Right cardiac atrium (tissue), 5 donors: ENCODE measurements at regions of chr3 and their contacts with region 1.

Region 1: DNA sequence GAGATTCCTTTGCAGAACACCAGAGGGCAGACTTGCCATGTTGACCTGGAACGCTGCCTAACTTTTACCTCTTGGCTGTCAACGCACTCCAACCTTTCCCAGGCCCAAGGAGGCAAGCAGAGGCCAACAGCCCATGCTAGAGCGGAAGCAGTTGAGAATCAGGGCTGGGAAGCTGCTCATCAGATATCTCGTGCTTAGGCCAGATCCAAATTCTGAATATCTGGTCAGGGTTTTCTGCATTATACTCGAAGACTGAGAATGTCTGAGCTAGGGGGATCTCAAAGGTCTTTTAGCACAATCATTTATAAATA is 2.5 kb downstream of the XIRP1 start:
- DNase-seq: peak; percentile 60 to 75 (median 70)
- ATAC-seq: peak; percentile 13 to 35
- H3K4me3 ChIP-seq: peak overlapping the region; percentile 69
- H3K27ac ChIP-seq: peak overlapping the region; percentile 25
- H3K4me1 ChIP-seq: peaks cover 2% of the 10 kb centered on the region
- H3K27me3 ChIP-seq: no peaks in the 10 kb centered on the region

Region 2: DNA sequence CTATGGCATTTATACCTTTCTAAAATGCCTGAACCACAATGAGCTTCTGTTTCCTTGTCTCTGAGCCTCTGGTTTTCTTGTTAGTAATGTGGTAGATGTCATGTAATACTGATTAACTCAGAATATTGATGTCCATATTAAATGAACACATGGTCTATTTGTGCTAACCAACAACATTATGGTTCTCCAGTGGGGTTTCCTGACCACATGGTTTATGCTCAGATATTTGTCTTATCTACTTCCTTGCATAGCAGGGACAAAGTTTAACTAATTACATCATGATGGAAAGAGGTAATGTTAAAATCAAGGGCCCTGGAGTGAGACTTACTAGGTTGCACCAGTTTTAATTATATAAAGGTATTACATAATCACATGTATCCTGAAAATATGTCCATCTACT is 311.3 kb before region 1 on chr3:
- intact Hi-C with region 1: no loop called
- DNase-seq: no peak
- ATAC-seq: no peak
- H3K4me3 ChIP-seq: no peak overlapping the region
- H3K27ac ChIP-seq: no peak overlapping the region
- H3K4me1 ChIP-seq: no peaks in the 10 kb centered on the region
- H3K27me3 ChIP-seq: no peaks in the 10 kb centered on the region

Region 3: GRCh38 chr3:39051647-39052561 is 138.0 kb before region 1 on chr3 and contains the starts of genes SCN11A and WDR48:
- intact Hi-C with region 1: no loop called
- DNase-seq: peak; percentile 95 to 97 (median 96)
- ATAC-seq: peak; percentile 100
- H3K4me3 ChIP-seq: peak within 1 kb of the TSS; percentile 97
- H3K27ac ChIP-seq: peak within 1 kb of the TSS; percentile 94
- H3K4me1 ChIP-seq: no peaks in the 10 kb centered on the region
- H3K27me3 ChIP-seq: no peaks in the 10 kb centered on the region
- total RNA-seq, gene SCN11A: 0.03 to 0.06 (median 0.03) TPM in 3 of 4 donors, not detected in the other
- total RNA-seq, gene WDR48: 16.5 to 30.5 (median 27.5) TPM

Region 4: GRCh38 chr3:39241561-39241960 is 51.6 kb after region 1 on chr3:
- intact Hi-C with region 1: no loop called
- DNase-seq: no peak
- ATAC-seq: no peak
- H3K4me3 ChIP-seq: no peak overlapping the region
- H3K27ac ChIP-seq: no peak overlapping the region
- H3K4me1 ChIP-seq: no peaks in the 10 kb centered on the region
- H3K27me3 ChIP-seq: no peaks in the 10 kb centered on the region

Region 5: GRCh38 chr3:39383045-39383880 is 193.3 kb after region 1 on chr3 and contains the start of gene SLC25A38:
- intact Hi-C with region 1: loop called in 1 of 4 experiments (anchors 5 kb)
- DNase-seq: peak; percentile 77 to 90 (median 86)
- ATAC-seq: peak; percentile 84 to 86
- H3K4me3 ChIP-seq: peak within 1 kb of the TSS; percentile 53
- H3K27ac ChIP-seq: peak within 1 kb of the TSS; percentile 92
- H3K4me1 ChIP-seq: peaks cover 11% of the 10 kb centered on the region
- H3K27me3 ChIP-seq: no peaks in the 10 kb centered on the region
- total RNA-seq, gene SLC25A38: 11.1 to 19.9 (median 13.0) TPM